GM12878 (cell line): ENCODE measurements at regions of chr4 and their contacts with region 1.

Region 1: GRCh38 chr4:138405934-138406567 is 163.9 kb upstream of the SLC7A11 start:
- DNase-seq: peak; percentile 42
- ATAC-seq: peak; percentile 86
- H3K4me3 ChIP-seq: no peak overlapping the region
- H3K27ac ChIP-seq: peak overlapping the region; percentile 38; the same call in 1 of the 2 replicates
- H3K4me1 ChIP-seq: peaks cover 28% of the 10 kb centered on the region
- H3K27me3 ChIP-seq: no peaks in the 10 kb centered on the region
- CTCF ChIP-seq: no peak
- EP300 ChIP-seq: peak; percentile 68 to 83
- POLR2A ChIP-seq: no peak
- RAD21 ChIP-seq: no peak

Region 2: DNA sequence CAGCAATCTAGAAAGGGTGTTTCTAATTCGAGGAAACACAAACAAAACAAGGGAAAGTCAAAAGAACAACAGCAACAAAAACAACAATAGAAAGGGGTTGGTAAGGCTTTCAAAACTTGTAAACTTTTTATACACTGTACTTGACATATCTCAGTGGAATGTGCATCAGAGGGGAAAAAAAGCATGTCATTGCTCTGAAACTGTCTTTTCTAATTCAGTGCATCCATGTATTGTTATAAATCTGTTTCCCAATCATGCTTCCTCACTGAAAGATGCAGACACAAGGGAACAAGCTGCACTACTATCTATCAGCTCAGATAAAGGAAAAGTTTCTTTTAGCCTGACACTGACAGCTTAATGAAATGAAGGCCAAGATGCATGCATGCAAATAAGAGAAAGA is 829.6 kb before region 1 on chr4:
- CTCF ChIA-PET with region 1: no interaction called
- POLR2A ChIA-PET with region 1: no interaction called
- RAD21 ChIA-PET with region 1: no interaction called
- SMC1A ChIA-PET with region 1: no interaction called
- in situ Hi-C with region 1: no loop called
- intact Hi-C with region 1: no loop called
- DNase-seq: no peak
- ATAC-seq: peak; percentile 12
- H3K4me3 ChIP-seq: no peak overlapping the region
- H3K27ac ChIP-seq: no peak overlapping the region
- H3K4me1 ChIP-seq: no peaks in the 10 kb centered on the region
- H3K27me3 ChIP-seq: no peaks in the 10 kb centered on the region
- CTCF ChIP-seq: no peak
- EP300 ChIP-seq: no peak
- POLR2A ChIP-seq: no peak
- RAD21 ChIP-seq: no peak

Region 3: DNA sequence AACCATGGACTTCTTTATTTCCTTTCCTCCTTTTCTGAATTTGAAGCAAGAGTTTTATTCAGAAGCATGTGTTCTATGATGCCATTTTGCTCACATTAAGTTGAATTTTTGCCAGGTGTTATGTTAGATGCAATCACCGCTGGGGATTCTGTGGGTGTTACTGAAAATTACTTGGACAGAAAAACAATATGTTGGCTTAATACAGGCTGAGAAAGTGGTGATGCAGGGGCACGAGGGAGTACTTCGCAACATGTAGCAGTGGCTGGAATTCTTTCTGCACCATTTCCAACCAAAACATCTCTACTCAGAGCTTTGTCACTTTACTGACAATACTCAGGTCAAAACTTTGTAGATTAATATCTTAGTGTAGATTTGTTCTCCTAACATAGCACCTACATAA is 764.5 kb before region 1 on chr4:
- CTCF ChIA-PET with region 1: no interaction called
- POLR2A ChIA-PET with region 1: no interaction called
- RAD21 ChIA-PET with region 1: no interaction called
- SMC1A ChIA-PET with region 1: no interaction called
- in situ Hi-C with region 1: no loop called
- intact Hi-C with region 1: loop called (anchors 5 kb)
- DNase-seq: no peak
- ATAC-seq: no peak
- H3K4me3 ChIP-seq: no peak overlapping the region
- H3K27ac ChIP-seq: no peak overlapping the region
- H3K4me1 ChIP-seq: peaks cover 6% of the 10 kb centered on the region; the same call in 1 of the 2 replicates
- H3K27me3 ChIP-seq: no peaks in the 10 kb centered on the region
- CTCF ChIP-seq: no peak
- EP300 ChIP-seq: no peak
- POLR2A ChIP-seq: no peak
- RAD21 ChIP-seq: no peak

Region 4: DNA sequence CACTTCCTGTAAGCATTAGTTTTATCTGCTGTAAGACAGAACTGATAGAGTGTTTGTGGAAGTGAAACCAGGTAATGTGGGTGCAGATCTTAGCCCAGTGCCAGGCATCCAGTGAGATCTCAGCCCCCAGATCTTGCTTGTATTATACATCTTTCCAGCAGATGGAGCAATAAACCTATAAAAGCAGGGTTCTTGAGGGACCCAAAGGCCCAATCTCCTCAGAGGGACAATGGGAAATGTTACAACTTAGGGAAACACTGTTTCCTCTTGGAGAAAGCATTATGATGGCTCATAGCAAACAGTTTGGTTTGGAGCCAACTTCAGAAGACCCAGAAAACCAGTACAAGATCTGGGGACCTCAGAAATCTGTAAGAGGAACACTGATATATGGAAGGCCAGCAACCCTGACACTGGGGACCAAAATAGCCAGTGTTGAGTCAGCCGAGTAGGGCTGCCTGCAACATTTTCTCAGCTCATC is 370.2 kb before region 1 on chr4:
- CTCF ChIA-PET with region 1: no interaction called
- POLR2A ChIA-PET with region 1: no interaction called
- RAD21 ChIA-PET with region 1: no interaction called
- SMC1A ChIA-PET with region 1: no interaction called
- in situ Hi-C with region 1: no loop called
- intact Hi-C with region 1: loop called (anchors 5 kb)
- DNase-seq: peak; percentile 69
- ATAC-seq: peak; percentile 100
- H3K4me3 ChIP-seq: no peak overlapping the region
- H3K27ac ChIP-seq: no peak overlapping the region
- H3K4me1 ChIP-seq: no peaks in the 10 kb centered on the region
- H3K27me3 ChIP-seq: no peaks in the 10 kb centered on the region
- CTCF ChIP-seq: peak; percentile 44 to 71 (median 64); a peak in 5 of 6 replicates
- EP300 ChIP-seq: 0 out of 4 replicates have a peak, but pooled peaks of 1 of the 2 experiments have one; percentile 43
- POLR2A ChIP-seq: no peak
- RAD21 ChIP-seq: peak; percentile 86

Region 5: DNA sequence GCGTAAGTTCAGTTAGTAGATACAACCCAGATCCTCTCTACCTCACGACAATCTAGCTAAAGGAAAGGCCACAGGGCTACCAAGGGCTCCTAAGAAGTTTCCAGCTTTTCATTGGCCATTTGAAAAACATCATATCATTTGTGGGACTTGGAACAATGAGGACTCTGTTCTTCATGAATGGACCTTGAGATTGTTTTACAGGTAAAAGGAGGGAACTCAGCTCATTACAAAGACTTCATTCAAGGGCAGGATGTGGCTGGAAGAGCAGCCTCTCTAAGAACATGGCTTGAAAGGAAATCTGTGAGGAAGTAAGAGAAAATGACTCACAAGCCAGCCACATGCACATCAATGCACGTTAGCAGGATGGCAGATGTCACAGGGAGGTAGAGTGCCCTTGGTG is 58.0 kb before region 1 on chr4:
- CTCF ChIA-PET with region 1: no interaction called
- POLR2A ChIA-PET with region 1: no interaction called
- RAD21 ChIA-PET with region 1: interaction called, 3 read pairs
- SMC1A ChIA-PET with region 1: interaction called, 4 read pairs
- in situ Hi-C with region 1: no loop called
- intact Hi-C with region 1: loop called (anchors 1 kb)
- DNase-seq: peak; percentile 32
- ATAC-seq: peak; percentile 74
- H3K4me3 ChIP-seq: no peak overlapping the region
- H3K27ac ChIP-seq: no peak overlapping the region
- H3K4me1 ChIP-seq: peaks cover 4% of the 10 kb centered on the region; the same call in 1 of the 2 replicates
- H3K27me3 ChIP-seq: no peaks in the 10 kb centered on the region
- CTCF ChIP-seq: no peak
- EP300 ChIP-seq: peak in 1 of 2 experiments; percentile 41; a peak in 1 of 4 replicates
- POLR2A ChIP-seq: no peak
- RAD21 ChIP-seq: no peak

Region 6: GRCh38 chr4:138392751-138393308 is 13.2 kb before region 1 on chr4:
- CTCF ChIA-PET with region 1: interaction called, 16 read pairs
- POLR2A ChIA-PET with region 1: interaction called, 9 read pairs
- RAD21 ChIA-PET with region 1: interaction called, 10 read pairs
- SMC1A ChIA-PET with region 1: interaction called, 18 read pairs
- in situ Hi-C with region 1: no loop called
- intact Hi-C with region 1: no loop called
- DNase-seq: peak; percentile 54
- ATAC-seq: peak; percentile 85
- H3K4me3 ChIP-seq: no peak overlapping the region
- H3K27ac ChIP-seq: peak overlapping the region; percentile 62
- H3K4me1 ChIP-seq: peaks cover 10% of the 10 kb centered on the region
- H3K27me3 ChIP-seq: no peaks in the 10 kb centered on the region
- CTCF ChIP-seq: no peak
- EP300 ChIP-seq: peak in 1 of 2 experiments; percentile 6; a peak in 1 of 4 replicates
- POLR2A ChIP-seq: no peak
- RAD21 ChIP-seq: no peak